Activated B cell treated with CpG ODN at 0.5 μM for 24 hours (primary cell): ENCODE measurements at regions of chr18 and their contacts with region 1.

Region 1: DNA sequence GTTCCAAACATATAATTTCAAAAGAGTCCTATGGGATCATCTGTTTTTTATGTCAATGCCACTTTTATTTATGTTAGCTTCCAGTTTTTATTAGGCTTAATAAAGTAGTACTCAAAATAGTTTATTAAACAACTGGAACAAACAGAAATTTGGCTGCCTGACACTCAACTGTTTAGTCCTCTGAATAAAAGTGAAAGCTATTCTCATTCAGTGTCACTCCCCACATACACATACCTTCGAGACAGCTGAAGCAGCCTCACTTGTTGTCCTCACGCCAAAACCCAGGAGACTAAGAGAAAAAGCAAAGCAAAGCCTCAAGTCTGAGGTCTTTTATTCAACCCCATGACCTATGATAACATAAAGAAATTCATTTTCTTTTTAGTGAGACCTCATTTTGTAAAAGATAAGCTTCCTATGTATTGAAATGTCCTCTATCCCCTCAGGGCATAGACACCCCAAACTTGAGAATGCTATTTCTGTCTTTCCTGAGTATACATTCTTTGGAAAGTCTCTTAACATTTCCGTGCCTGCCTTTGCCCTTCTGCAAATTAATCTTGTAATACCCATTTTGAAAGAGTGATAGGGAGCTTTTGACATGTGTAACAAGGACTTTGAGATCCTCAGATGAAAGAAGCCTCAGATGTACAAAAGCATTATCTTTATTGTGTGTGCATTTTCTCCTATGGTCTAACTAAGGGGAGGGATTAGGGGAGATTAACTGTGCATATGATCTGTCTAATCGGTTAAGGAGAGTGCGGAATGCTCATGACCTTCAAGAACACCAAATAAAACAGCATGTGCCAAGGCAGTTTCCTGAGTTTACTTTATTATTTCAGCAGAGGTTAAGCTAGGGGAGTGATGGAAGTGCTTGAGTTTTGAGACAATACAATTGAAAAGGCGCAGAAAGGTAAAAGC is 1523.7 kb upstream of the PIK3C3 start:
- DNase-seq: no peak
- ATAC-seq: no peak
- H3K4me3 Mint-ChIP-seq: no peak overlapping the region
- H3K27ac Mint-ChIP-seq: no peak overlapping the region
- H3K4me1 Mint-ChIP-seq: no peaks in the 10 kb centered on the region
- H3K27me3 Mint-ChIP-seq: no peaks in the 10 kb centered on the region
- CTCF ChIP-seq: no peak

Region 2: GRCh38 chr18:40387130-40387787 is 44.1 kb before region 1 on chr18:
- CTCF ChIA-PET with region 1: no interaction called
- POLR2A ChIA-PET with region 1: no interaction called
- intact Hi-C with region 1: loop called (anchors 5 kb)
- DNase-seq: no peak
- ATAC-seq: no peak
- H3K4me3 Mint-ChIP-seq: no peak overlapping the region
- H3K27ac Mint-ChIP-seq: no peak overlapping the region
- H3K4me1 Mint-ChIP-seq: no peaks in the 10 kb centered on the region
- H3K27me3 Mint-ChIP-seq: no peaks in the 10 kb centered on the region
- CTCF ChIP-seq: no peak